CD8-positive, alpha-beta T cell (primary cell): ENCODE measurements at regions of chr3 and their contacts with region 1.

Region 1: DNA sequence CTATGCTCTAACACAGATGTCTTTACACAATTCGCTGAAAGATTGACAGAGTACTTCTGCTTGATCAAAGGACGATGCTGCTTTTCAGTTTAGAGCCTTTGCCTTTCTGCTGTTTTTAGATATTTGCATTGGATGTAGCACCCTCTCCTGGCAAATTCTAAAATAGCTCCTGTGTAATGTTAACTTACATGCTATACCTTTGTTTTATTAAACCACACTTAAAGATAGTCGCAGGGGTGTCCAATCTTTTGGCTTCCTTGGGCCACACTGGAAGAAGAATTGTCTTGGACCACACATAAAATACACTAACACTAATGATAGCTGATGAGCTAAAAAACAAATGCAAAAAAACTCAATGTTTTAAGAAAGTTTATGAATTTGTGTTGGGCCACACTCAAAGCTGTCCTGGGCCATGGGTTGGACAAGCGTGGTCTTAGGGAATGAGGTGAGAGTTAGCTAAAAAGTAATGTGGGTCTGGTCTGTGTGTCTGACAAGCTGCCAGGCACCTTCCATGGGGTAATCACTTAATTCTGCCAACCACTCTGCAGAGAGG is 62.9 kb downstream of the ATG7 start:
- DNase-seq: peak in 4 of 9 experiments; percentile 13 to 74 (median 46)
- ATAC-seq: peak; percentile 75
- H3K4me3 ChIP-seq: no peak overlapping the region
- H3K4me3 Mint-ChIP-seq: no peak overlapping the region
- H3K27ac ChIP-seq: no peak overlapping the region
- H3K27ac Mint-ChIP-seq: no peak overlapping the region
- H3K4me1 ChIP-seq: no peaks in the 10 kb centered on the region
- H3K4me1 Mint-ChIP-seq: peaks cover 2% of the 10 kb centered on the region
- H3K27me3 ChIP-seq: no peaks in the 10 kb centered on the region
- H3K27me3 Mint-ChIP-seq: no peaks in the 10 kb centered on the region
- CTCF ChIP-seq: peak; percentile 66

Region 2: GRCh38 chr3:10758304-10759061 is 576.6 kb before region 1 on chr3:
- CTCF ChIA-PET with region 1: no interaction called
- POLR2A ChIA-PET with region 1: no interaction called
- intact Hi-C with region 1: loop called in 1 of 2 experiments (anchors 2 kb)
- DNase-seq: peak in 8 of 9 experiments; percentile 7 to 61 (median 34)
- ATAC-seq: peak; percentile 46
- H3K4me3 ChIP-seq: no peak overlapping the region
- H3K4me3 Mint-ChIP-seq: no peak overlapping the region
- H3K27ac ChIP-seq: no peak overlapping the region
- H3K27ac Mint-ChIP-seq: no peak overlapping the region
- H3K4me1 ChIP-seq: no peaks in the 10 kb centered on the region
- H3K4me1 Mint-ChIP-seq: no peaks in the 10 kb centered on the region
- H3K27me3 ChIP-seq: peaks cover 0 to 4% of the 10 kb centered on the region in 2 experiments
- H3K27me3 Mint-ChIP-seq: peaks cover 36% of the 10 kb centered on the region
- CTCF ChIP-seq: peak; percentile 61

Region 3: DNA sequence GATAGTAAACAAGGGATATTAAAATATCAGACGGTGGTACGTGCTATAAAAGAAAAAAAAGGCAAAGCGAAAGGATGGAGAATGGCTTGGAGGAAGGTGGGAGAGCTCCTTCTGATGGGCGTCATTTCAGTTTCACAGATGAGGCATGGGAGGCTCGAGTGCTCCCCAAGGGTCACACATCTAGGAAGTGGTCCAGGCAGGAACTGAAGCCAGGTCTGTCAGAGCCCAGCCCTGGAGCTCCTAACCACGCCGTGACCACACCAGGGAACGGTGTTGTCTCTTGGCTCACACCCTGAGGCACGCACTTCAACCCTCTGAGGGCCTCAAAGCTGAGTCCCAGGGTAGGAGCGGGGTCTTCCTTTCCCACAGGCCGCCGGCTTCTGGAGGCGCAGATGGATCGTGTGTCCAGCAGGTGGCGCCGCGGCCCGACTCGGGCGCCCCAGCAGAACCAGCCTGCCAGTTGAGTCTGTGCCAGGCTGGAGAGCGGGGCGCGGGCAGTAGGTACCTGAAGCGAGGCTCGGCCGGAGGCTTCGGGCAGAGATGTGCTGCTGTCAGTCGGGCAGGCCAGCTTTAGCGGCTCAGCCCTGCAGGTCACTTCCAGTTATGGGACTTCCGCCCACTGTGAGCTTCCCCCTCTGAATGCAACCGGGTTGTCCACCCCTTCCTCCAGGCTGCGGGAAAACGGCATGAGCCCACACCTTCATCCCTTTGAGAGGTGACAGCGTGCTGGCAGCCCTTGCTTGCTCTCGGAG is 274.5 kb before region 1 on chr3:
- CTCF ChIA-PET with region 1: interaction called, 6 read pairs
- POLR2A ChIA-PET with region 1: no interaction called
- intact Hi-C with region 1: loop called (anchors 1 to 5 kb)
- DNase-seq: peak in 7 of 9 experiments; percentile 5 to 40 (median 23)
- ATAC-seq: no peak
- H3K4me3 ChIP-seq: no peak overlapping the region
- H3K4me3 Mint-ChIP-seq: no peak overlapping the region
- H3K27ac ChIP-seq: no peak overlapping the region
- H3K27ac Mint-ChIP-seq: no peak overlapping the region
- H3K4me1 ChIP-seq: no peaks in the 10 kb centered on the region
- H3K4me1 Mint-ChIP-seq: peaks cover 4% of the 10 kb centered on the region
- H3K27me3 ChIP-seq: no peaks in the 10 kb centered on the region
- H3K27me3 Mint-ChIP-seq: peaks cover 34% of the 10 kb centered on the region
- CTCF ChIP-seq: peak; percentile 52

Region 4: DNA sequence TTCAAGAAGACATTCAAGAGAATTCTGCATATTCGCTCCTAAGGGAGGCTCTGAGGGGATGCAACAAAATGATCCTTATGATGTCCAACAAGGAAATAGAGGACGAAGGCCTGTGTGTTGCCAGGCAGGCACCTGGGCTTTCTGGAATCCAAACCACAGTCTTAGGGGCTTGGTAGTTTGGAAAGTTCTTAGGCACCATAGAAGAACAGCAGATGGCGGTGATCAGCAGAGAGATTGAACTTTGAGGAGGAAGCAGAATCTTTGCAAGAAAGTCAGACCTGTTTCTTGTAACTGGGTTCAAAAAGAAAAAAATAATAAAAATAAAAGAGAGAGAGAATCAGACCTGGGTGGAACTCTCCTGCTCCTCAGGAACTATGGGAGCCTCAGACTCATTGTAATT is 74.7 kb before region 1 on chr3:
- CTCF ChIA-PET with region 1: interaction called, 3 read pairs
- POLR2A ChIA-PET with region 1: no interaction called
- intact Hi-C with region 1: loop called in 1 of 2 experiments (anchors 1 kb)
- DNase-seq: peak in 2 of 9 experiments; percentile 20 to 38
- ATAC-seq: no peak
- H3K4me3 ChIP-seq: no peak overlapping the region
- H3K4me3 Mint-ChIP-seq: no peak overlapping the region
- H3K27ac ChIP-seq: no peak overlapping the region
- H3K27ac Mint-ChIP-seq: no peak overlapping the region
- H3K4me1 ChIP-seq: no peaks in the 10 kb centered on the region
- H3K4me1 Mint-ChIP-seq: no peaks in the 10 kb centered on the region
- H3K27me3 ChIP-seq: peaks cover 0 to 2% of the 10 kb centered on the region in 2 experiments
- H3K27me3 Mint-ChIP-seq: peaks cover 16% of the 10 kb centered on the region
- CTCF ChIP-seq: no peak

Region 5: DNA sequence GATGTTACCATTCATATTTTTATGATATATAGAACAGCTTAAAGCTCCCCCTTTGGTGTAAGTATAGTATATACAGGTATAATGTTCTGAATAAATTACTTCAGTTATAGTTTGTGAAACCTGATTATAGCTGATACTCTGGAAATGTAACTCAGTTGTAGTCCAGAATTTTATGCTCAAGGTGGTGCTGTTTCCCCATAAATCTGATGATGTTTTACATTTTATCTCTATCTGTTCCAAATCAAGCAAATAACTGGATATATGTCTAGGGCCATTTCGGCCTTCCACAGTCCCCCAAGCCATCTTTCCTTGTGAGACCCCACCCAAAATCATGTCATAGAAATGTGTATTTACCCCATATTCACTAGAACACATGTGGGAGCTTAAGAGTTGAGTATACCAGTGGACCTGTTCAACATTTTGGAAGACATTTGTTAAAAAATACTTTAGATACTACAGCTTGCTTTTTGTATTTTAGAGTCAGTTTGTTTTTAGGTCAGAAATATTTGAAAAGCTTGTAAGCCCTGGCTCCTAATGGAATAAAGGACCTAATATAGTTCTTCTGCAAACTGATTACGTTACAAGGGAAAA is 44.2 kb after region 1 on chr3:
- CTCF ChIA-PET with region 1: no interaction called
- POLR2A ChIA-PET with region 1: no interaction called
- intact Hi-C with region 1: no loop called
- DNase-seq: peak in 2 of 9 experiments; percentile 51 to 61
- ATAC-seq: peak; percentile 40
- H3K4me3 ChIP-seq: no peak overlapping the region
- H3K4me3 Mint-ChIP-seq: no peak overlapping the region
- H3K27ac ChIP-seq: no peak overlapping the region
- H3K27ac Mint-ChIP-seq: no peak overlapping the region
- H3K4me1 ChIP-seq: no peaks in the 10 kb centered on the region
- H3K4me1 Mint-ChIP-seq: no peaks in the 10 kb centered on the region
- H3K27me3 ChIP-seq: no peaks in the 10 kb centered on the region
- H3K27me3 Mint-ChIP-seq: no peaks in the 10 kb centered on the region
- CTCF ChIP-seq: peak; percentile 58

Region 6: GRCh38 chr3:11651900-11652299 is 316.8 kb after region 1 on chr3:
- CTCF ChIA-PET with region 1: interaction called, 10 read pairs
- POLR2A ChIA-PET with region 1: no interaction called
- intact Hi-C with region 1: no loop called
- DNase-seq: peak in 2 of 9 experiments; percentile 56 to 67
- ATAC-seq: no peak
- H3K4me3 ChIP-seq: no peak overlapping the region
- H3K4me3 Mint-ChIP-seq: no peak overlapping the region
- H3K27ac ChIP-seq: no peak overlapping the region
- H3K27ac Mint-ChIP-seq: no peak overlapping the region
- H3K4me1 ChIP-seq: peaks cover 11% of the 10 kb centered on the region
- H3K4me1 Mint-ChIP-seq: peaks cover 13% of the 10 kb centered on the region
- H3K27me3 ChIP-seq: no peaks in the 10 kb centered on the region
- H3K27me3 Mint-ChIP-seq: no peaks in the 10 kb centered on the region
- CTCF ChIP-seq: peak; percentile 83